ENCODE measurements at regions of chr13 and their contacts with region 1.

Region 1: DNA sequence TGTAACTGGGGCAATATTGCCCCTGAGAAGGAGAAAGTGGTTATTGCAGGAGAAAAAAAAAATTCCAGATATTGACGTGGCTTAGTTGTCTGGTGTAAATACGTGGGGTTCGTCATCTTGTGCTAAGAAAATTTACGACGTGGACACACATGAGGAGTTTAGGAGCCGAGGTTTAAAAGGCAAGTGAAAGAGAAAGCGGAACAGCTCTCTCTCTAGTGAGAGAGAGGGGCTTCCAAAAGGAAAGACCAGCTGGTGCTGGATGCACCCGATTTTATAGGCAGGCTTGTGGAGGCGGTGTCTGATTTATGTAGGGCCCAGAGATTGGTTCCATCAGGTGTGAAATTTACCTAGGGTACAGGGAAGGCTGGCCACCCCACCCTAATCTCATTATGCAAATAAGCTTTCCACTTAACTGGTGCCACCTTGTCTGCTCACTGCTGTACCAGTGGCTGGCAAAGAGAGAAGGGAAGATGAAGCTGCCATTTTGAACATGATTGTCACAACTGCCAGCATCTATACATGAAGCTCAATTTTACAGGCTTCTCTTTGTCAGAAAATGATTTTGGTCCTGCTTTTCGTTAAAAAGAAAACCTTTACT is 845.1 kb downstream of the DACH1 start:
- DNase-seq: no peak
- H3K4me3 ChIP-seq: no peak overlapping the region
- CTCF ChIP-seq: no peak
- POLR2A ChIP-seq: no peak

Region 2: GRCh38 chr13:70995338-70995737 is 26.6 kb before region 1 on chr13:
- intact Hi-C with region 1: no loop called
- DNase-seq: no peak
- H3K4me3 ChIP-seq: no peak overlapping the region
- CTCF ChIP-seq: no peak
- POLR2A ChIP-seq: no peak

Region 3: GRCh38 chr13:71056581-71056980 is 34.7 kb after region 1 on chr13:
- intact Hi-C with region 1: loop called (anchors 1 kb)
- DNase-seq: no peak
- H3K4me3 ChIP-seq: no peak overlapping the region
- CTCF ChIP-seq: no peak
- POLR2A ChIP-seq: no peak

Measured in lower leg skin (tissue), 4 donors.